ENCODE measurements at regions of chr18 and their contacts with region 1.

Region 1: DNA sequence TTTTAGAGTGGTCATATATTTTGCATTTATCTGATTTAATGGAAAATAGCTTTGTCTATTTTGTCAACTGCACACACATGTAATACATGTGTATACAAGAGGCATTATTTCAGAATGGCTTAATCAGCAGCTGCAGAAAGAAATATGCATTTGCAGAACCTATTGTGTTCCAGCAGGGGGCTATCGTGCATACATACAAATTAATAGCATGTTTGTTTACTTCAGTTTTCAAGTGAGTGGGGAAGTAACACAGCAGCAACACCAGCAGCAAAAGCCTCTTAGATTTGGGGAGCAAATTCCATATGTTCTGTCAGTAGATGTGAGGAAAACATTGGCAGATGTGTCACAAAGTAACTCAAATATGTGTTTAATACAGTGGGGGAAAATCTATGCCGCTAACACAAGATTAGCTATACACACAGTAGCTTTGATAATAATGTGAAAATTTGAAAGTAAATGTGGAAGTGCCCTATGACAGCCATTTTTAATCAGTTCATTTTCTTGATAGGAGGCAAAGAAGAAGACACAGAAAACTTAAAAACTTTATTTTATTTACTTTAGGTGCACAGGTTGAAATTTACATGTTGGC is 218.1 kb downstream of the WDR7 start:
- DNase-seq: peak in 1 of 10 donors; percentile 26

Region 2: DNA sequence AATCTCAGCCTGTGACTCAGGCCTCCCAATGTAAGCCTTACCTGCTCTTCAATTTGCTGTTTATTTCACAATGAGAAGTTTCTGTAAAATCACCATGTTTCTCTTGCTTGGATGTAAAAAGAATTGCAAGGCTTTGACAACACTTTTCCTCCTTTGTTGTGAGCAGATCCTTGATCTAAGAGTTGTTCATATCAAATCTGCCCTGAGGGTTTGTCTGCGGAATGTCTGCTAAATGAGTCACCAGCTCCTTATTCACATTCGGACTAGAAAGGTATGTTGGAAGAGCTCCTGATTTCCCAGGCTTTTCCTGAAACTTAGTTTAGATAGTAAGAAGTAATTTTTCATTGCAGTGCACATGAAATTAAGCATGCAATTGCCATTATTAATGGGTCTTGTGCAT is 1013.1 kb before region 1 on chr18:
- intact Hi-C with region 1: no loop called
- DNase-seq: no peak

Region 3: DNA sequence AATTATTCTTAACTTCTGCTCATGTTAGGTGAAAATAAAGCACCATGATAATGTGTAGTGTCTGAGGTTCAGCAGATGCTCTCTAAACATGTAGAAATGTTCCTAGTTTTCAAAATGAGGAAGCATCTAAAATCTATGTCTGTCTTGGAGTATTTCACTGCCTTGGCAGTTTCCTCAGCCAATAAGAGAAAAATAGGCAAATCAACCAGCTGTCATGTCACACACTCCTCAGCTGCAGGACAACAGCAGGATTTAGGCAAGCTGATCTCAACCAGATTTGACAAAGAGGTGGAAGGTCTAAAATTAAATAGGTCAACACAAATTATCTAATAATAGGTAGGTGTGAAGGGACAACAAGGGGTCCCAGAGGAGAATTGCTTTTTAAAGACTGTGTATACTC is 113.5 kb after region 1 on chr18:
- intact Hi-C with region 1: loop called (anchors 5 kb)
- DNase-seq: no peak

Region 4: DNA sequence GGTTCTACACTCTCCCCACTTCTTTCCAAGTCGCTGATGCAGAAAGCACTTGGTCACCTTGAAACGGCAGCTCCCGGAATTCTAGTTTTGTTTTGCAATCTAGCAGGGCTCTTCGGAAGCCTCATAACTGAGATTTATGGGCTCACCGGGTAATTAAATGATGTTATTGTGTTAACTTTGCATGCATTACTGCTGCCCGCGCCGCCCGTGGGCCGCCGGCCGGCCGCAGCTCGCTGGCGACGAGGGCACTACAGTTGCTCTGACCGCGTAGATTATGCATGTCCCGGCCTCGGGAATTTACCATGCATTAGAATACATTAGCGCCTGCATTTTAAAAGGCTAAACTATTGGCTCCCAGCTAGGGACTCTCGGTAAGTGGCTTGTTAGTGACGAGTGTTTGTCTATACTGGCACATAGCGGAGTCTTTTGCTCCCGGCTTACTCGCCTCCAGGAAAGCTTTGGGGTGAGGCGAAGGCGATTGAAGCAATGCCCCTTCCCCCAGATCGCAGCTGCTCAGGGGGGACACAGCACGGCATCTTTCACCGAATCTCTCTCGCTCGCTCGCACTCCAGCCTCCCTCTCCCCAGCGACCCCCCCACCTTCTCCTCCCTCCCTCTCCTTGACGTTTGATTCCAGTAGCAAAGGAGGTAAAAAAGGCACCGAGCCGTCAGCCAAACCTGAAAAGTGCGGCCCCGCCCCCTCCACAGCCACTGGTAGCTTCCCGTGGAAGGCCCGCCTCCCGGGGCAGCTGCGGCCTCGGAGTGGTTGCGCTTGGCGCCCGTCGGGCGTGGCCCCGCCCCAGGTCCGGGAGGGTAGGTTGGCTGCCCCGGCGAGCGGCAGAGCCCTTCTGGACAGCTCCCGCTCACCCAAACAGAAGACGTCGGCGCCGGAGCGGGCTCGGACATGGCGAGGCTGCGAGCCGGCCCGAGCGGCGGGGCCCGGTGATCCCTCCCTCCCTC is 565.5 kb after region 1 on chr18 and contains the start of gene ONECUT2:
- intact Hi-C with region 1: loop called (anchors 5 kb)
- DNase-seq: peak; percentile 77 to 98 (median 86)